ENCODE measurements at regions of chrX and their contacts with region 1.

Region 1: GRCh38 chrX:40300286-40300925 is 202.6 kb upstream of the BCOR start:
- DNase-seq: no peak
- ATAC-seq: no peak
- H3K4me3 ChIP-seq: no peak overlapping the region
- H3K27ac ChIP-seq: no peak overlapping the region
- H3K4me1 ChIP-seq: no peaks in the 10 kb centered on the region
- H3K27me3 ChIP-seq: peaks cover 0 to 40% (median 0%) of the 10 kb centered on the region in 3 donors
- CTCF ChIP-seq: no peak

Region 2: DNA sequence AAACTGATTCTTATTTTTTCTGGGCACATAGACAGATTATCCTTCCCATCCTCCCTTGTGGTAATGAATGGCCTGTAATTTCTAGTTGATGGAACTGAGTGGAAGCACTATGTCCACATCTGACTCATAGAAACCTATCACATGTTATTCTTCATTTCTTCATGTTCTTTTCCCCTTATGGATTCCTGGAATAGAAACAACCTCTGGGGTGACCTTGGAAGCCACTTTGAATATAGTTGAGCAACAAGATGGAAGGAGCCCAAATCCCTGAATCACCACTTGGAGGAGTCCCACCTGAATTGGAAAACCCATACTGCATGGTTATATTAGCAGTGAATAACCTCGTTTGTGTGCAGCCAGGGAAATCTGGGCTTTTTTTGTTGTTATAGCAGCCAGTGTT is 1361.3 kb before region 1 on chrX:
- intact Hi-C with region 1: no loop called
- DNase-seq: no peak
- ATAC-seq: peak; percentile 39 to 71 (median 64)
- H3K4me3 ChIP-seq: no peak overlapping the region
- H3K27ac ChIP-seq: peak overlapping the region; percentile 67
- H3K4me1 ChIP-seq: peaks cover 6% of the 10 kb centered on the region
- H3K27me3 ChIP-seq: no peaks in the 10 kb centered on the region
- CTCF ChIP-seq: no peak

Region 3: DNA sequence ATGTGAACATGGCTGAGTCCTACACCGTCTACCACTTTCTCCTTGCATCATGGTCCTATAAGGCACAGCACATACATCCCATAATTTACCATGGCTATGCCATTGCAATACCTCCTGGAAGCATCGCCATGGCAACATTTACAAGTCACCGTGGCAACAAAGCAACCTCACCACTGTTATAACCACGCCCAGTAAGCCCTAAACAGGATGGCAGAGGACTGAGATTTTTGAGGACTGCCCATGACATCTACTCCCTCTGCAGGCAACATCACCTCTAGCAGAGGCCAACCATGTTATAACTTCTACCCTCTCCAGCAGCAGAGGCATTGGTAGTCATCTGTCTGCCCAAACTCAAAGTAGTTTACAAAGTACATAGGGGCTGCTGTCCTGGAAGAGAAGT is 232.4 kb before region 1 on chrX:
- intact Hi-C with region 1: no loop called
- DNase-seq: no peak
- ATAC-seq: no peak
- H3K4me3 ChIP-seq: no peak overlapping the region
- H3K27ac ChIP-seq: no peak overlapping the region
- H3K4me1 ChIP-seq: peaks cover 4% of the 10 kb centered on the region
- H3K27me3 ChIP-seq: no peaks in the 10 kb centered on the region
- CTCF ChIP-seq: no peak

Region 4: GRCh38 chrX:40146262-40147125 is 153.9 kb before region 1 on chrX:
- intact Hi-C with region 1: no loop called
- DNase-seq: peak in 1 of 2 donors; percentile 62
- ATAC-seq: peak; percentile 49 to 76 (median 69)
- H3K4me3 ChIP-seq: peak overlapping the region; percentile 69
- H3K27ac ChIP-seq: peak overlapping the region; percentile 41
- H3K4me1 ChIP-seq: peaks cover 7% of the 10 kb centered on the region
- H3K27me3 ChIP-seq: peaks cover 0 to 76% (median 0%) of the 10 kb centered on the region in 3 donors
- CTCF ChIP-seq: no peak

Region 5: DNA sequence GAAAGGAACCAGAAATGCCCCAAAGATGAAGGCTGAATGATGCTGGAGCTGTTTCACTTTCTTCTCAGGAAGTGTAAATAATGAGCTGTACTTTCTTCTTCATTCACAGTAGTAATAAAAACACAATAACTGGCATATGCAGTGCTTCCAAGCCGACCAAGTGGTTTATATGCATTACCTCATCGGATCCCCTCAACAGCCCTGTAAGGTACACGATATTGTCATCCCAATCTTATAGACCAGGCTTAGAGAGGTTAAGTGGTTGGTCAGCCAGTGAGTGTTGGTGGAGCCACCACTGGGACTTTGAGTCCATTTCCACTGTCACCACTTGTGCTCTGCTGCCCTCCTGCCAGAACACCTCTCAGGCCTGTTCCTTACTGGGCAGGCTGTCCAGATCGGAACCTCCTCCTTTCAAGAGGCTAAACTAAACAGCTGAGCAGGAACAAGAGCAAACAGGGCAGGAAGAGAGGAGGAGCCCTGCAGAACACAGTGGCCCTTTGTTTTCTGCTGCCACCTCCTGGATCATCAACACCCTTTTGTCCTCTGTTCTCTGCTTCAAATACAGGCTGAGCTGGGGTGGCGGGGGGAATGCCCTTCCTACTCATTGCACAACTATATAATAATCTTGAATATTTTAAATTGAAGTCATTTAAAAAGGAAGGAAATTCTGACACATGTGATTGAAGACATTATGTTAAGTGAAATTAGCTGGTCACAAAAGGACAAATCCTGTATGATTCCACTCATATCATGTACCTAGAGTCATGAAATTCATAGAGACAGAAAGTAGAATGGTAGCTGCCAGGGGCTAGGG is 167.8 kb after region 1 on chrX:
- intact Hi-C with region 1: loop called in 1 of 2 experiments (anchors 10 kb)
- DNase-seq: no peak
- ATAC-seq: peak; percentile 48 to 78 (median 64)
- H3K4me3 ChIP-seq: no peak overlapping the region
- H3K27ac ChIP-seq: no peak overlapping the region
- H3K4me1 ChIP-seq: no peaks in the 10 kb centered on the region
- H3K27me3 ChIP-seq: peaks cover 0 to 46% (median 0%) of the 10 kb centered on the region in 3 donors
- CTCF ChIP-seq: no peak